ENCODE measurements at regions of chr3 and their contacts with region 1.

Region 1: DNA sequence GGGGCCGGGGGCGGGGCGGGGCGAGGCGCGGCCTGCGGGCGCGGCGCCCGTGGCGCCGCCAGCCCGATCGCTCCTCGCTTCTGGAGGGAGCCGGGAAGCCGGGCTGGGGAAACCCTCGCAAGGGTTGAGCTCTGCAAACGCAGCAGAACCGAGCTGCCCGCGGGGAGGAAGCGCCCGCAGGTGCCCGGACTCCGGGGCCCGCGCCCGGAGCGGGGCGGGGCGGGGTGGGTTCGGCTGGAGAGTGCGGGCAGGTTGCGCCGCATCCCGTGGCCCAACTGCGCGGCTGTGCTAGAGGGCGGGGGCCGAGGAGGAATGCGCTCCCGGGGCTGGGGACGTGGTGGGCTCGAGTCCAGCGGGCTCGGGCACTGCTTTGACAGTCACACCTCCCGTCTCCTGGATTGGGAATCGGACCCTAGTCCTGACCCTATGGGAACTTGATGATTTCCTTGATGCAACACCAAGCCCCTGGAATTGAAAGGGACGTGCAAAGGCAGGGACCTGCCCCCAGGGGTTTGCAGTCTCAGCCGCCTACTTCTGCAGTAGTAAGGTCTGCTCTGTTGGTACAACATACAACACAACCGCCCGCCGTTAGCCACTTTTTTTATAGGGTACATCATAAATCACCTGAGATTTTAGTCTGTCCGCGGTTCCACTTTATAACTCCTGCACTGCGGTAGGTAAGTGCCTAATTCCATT is 34.3 kb downstream of the ZBTB38 start:
- DNase-seq: peak; percentile 56
- H3K4me3 Mint-ChIP-seq: peak overlapping the region; percentile 84
- H3K27ac Mint-ChIP-seq: peak overlapping the region; percentile 81
- H3K4me1 Mint-ChIP-seq: peaks cover 63% of the 10 kb centered on the region
- H3K27me3 Mint-ChIP-seq: no peaks in the 10 kb centered on the region

Region 2: GRCh38 chr3:140942221-140943104 is 460.2 kb before region 1 on chr3:
- CTCF ChIA-PET with region 1: no interaction called
- POLR2A ChIA-PET with region 1: no interaction called
- DNase-seq: peak; percentile 52
- H3K4me3 Mint-ChIP-seq: peak overlapping the region; percentile 80
- H3K27ac Mint-ChIP-seq: peak overlapping the region; percentile 86
- H3K4me1 Mint-ChIP-seq: peaks cover 30% of the 10 kb centered on the region
- H3K27me3 Mint-ChIP-seq: peaks cover 21% of the 10 kb centered on the region

Region 3: DNA sequence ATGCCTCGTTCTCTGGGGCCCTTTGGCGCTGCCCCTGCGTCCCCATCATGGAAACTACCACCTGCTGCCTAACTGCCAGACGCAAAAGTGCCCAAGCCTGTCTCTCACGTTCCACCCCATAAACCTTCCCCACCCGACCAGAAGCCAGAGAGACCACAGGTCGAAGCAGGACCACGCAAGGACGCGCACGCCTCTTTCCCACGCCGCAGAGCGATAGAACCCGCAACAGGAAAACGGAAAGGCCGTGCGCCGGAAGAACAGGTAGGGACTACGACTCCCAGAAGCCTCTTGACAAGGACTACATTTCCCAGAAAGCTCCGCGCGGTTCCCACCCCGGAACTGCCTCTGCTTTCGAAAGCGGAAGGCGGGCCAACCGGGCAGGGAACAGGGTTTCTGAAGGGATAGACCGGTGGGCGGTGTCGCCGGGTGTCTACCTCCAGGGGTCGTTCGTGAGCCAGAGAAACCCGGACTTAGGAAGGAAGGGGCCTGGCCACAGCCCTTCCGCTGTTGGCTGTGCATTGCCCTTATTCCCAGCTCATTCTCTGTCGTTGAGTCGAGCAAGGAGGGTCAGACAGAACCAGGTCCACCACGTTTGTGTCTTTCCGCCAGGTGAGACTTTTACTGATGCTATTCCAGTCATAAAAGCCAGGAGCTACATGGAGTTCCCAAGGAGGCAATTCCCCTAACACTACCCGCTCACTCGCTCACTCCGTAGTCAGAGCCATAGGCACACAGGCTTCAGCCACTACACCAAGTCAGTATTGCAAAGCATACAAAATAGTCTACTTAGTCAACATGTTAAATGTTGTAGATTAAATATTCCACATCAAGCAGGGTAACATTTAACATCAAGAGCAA is 90.9 kb before region 1 on chr3:
- CTCF ChIA-PET with region 1: interaction called, 3 read pairs
- POLR2A ChIA-PET with region 1: interaction called, 10 read pairs
- DNase-seq: peak; percentile 99
- H3K4me3 Mint-ChIP-seq: peak overlapping the region; percentile 93
- H3K27ac Mint-ChIP-seq: peak overlapping the region; percentile 86
- H3K4me1 Mint-ChIP-seq: peaks cover 58% of the 10 kb centered on the region
- H3K27me3 Mint-ChIP-seq: no peaks in the 10 kb centered on the region

Region 4: DNA sequence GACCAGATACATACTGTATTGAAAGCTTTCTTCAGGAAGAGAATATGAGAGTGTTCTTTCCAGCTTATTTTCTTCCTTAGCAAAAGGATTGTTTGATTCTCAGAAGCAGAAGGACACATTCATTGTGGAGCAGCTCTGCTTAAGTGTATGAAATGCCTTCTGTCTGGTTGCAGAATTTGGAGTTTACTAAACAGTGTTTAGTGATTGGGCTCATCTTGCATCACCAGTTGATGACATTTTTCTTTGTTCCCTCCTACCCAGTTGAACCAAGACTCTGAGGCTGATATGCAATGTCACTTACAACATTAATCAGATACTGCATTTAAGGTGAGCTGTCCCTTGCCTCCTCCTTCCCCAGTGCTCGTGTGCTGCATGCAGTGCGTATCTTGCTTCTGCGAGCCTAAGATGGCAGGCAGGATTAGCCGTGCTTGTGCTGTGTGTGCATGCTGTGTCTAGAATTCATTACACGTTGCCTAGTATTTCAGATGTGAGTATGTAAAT is 16.0 kb before region 1 on chr3:
- CTCF ChIA-PET with region 1: interaction called, 4 read pairs
- POLR2A ChIA-PET with region 1: interaction called, 320 read pairs
- DNase-seq: no peak
- H3K4me3 Mint-ChIP-seq: peak overlapping the region; percentile 63
- H3K27ac Mint-ChIP-seq: peak overlapping the region; percentile 65
- H3K4me1 Mint-ChIP-seq: peaks cover 37% of the 10 kb centered on the region
- H3K27me3 Mint-ChIP-seq: no peaks in the 10 kb centered on the region